PC-9 (cell line): ENCODE measurements at regions of chr3 and their contacts with region 1.

Region 1: DNA sequence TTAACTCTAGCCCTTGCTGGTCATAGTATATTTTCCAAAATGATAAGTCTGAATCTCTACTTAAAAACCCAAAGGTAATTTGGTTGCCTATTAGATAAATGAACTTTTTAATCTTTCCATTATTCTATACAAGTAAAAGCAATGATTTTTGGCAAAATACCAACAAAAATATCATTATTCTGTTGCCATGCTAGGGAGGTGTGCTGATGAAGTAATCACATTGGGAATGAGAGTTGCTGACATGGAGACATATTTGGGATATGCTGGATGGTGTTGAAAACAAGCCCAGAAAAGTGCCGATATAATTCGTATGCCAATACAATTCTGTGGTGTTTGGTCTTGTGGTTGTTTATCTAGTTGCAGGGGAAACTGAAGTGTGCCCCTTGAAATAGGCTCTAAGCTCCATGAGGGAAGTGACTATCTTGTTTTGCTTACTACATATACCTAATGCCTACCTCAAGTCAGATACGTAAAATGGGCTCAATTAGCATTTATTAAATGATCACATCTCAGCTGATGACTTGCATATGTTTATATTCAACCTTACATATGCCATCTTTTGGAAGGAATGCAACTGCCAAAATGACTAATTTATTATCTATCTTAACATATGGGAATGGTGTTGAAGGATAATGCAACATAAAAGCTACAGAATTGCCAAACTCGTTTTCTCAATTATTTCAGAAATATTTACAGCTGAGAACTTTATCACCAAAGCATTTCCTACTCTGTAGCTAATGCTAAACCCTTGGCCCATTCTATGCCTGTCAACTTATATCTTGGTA is 5.8 kb downstream of the TOPBP1 start:
- DNase-seq: no peak
- H3K4me3 ChIP-seq: no peak overlapping the region
- H3K27ac ChIP-seq: no peak overlapping the region
- H3K4me1 ChIP-seq: peaks cover 10% of the 10 kb centered on the region; the same call in 1 of the 2 replicates
- H3K27me3 ChIP-seq: no peaks in the 10 kb centered on the region
- CTCF ChIP-seq: no peak

Region 2: DNA sequence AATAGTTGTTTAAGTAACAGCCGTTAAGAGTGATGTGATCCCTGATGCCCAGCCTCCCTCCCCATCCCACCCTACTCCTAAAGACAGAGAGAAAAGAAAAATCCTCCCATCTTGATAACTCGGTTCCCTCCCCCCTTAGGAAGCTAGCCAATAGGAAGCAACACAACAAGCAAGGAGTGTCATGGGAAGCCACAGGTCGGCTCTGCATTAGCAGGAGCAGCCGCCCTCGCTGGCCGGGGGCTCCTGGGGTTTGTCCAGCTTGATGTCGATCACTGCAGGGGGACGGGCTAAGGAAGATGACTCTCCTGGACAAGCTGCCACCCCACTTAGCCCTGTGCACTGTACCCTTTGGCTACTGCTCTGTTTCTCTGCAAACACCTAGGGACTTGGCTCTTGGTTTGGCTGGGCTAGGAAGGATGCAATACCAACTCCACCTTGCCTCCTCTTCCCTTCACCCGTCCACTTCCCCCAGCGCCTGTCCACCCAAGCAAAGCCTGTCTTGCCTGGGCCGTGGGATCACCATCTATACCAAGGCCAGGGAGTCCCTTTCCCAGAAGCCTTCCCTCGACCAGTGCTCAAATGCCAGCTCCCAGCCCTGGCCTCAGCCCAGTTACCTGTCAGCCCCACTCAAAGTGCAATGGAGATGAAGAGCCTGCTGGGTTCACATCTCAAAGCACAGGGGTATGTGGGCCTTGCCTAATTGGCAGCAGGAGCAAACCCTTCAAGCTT is 172.8 kb after region 1 on chr3:
- CTCF ChIA-PET with region 1: interaction called, 12 read pairs
- POLR2A ChIA-PET with region 1: no interaction called
- intact Hi-C with region 1: no loop called
- DNase-seq: no peak
- H3K4me3 ChIP-seq: no peak overlapping the region
- H3K27ac ChIP-seq: no peak overlapping the region
- H3K4me1 ChIP-seq: no peaks in the 10 kb centered on the region
- H3K27me3 ChIP-seq: peaks cover 7% of the 10 kb centered on the region; the same call in 1 of the 2 replicates
- CTCF ChIP-seq: no peak